ENCODE measurements at regions of chr15 and their contacts with region 1.

Region 1: DNA sequence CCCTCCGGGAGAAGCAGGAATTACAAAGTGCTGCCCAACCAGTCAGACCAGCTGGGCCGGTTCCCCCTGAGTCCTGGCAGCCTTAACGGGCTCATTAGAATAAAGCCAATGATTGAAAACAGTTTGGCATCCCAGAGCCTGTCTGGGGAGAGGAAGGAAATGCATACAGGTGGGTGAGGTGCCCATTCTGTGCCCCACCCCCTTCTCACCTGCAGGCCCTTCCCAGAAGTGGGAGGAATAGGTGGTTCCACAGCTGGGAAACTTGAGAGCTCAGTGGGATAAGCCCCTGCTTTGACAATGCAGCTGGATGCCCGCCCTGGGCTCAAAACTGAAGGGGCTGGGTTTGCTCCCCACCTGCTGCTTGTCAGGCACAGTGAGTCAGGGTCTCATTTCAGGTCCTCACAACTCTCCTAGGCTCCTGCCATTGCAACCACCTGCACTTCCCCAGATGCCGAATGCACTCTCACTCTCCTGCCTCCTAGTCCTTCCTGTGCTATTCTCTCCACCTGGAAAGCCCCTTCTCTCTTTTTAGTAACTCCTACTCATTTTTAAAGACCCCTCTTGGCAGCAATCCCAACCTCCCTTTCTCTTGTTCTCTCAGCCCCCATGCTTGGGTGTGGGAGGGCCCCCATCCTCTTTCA is 5.5 kb upstream of the BUB1B start:
- DNase-seq: no peak
- ATAC-seq: peak; percentile 74
- H3K4me3 ChIP-seq: no peak overlapping the region
- H3K27ac ChIP-seq: no peak overlapping the region; the same call in 1 of the 2 replicates
- H3K4me1 ChIP-seq: peaks cover 18 to 25% of the 10 kb centered on the region in 2 experiments
- H3K27me3 ChIP-seq: no peaks in the 10 kb centered on the region
- CTCF ChIP-seq: no peak
- POLR2A ChIP-seq: no peak
- RAD21 ChIP-seq: no peak

Region 2: GRCh38 chr15:40125950-40126349 is 29.4 kb before region 1 on chr15:
- CTCF ChIA-PET with region 1: no interaction called
- POLR2A ChIA-PET with region 1: interaction called, 3 read pairs
- RAD21 ChIA-PET with region 1: no interaction called
- intact Hi-C with region 1: loop called (anchors 2 kb)
- DNase-seq: no peak
- ATAC-seq: no peak
- H3K4me3 ChIP-seq: no peak overlapping the region
- H3K27ac ChIP-seq: no peak overlapping the region
- H3K4me1 ChIP-seq: peaks cover 7 to 13% of the 10 kb centered on the region in 2 experiments
- H3K27me3 ChIP-seq: no peaks in the 10 kb centered on the region
- CTCF ChIP-seq: no peak
- POLR2A ChIP-seq: no peak
- RAD21 ChIP-seq: no peak

Region 3: GRCh38 chr15:40175160-40175559 is 19.8 kb after region 1 on chr15:
- CTCF ChIA-PET with region 1: no interaction called
- POLR2A ChIA-PET with region 1: no interaction called
- RAD21 ChIA-PET with region 1: no interaction called
- intact Hi-C with region 1: no loop called
- DNase-seq: no peak
- ATAC-seq: no peak
- H3K4me3 ChIP-seq: no peak overlapping the region
- H3K27ac ChIP-seq: no peak overlapping the region
- H3K4me1 ChIP-seq: no peaks in the 10 kb centered on the region
- H3K27me3 ChIP-seq: no peaks in the 10 kb centered on the region
- CTCF ChIP-seq: no peak
- POLR2A ChIP-seq: no peak
- RAD21 ChIP-seq: no peak